Mammary epithelial cell (primary cell): ENCODE measurements at regions of chr3 and their contacts with region 1.

Region 1: GRCh38 chr3:14096745-14097144 is 27.9 kb downstream of the CHCHD4 start:
- DNase-seq: no peak
- H3K4me3 ChIP-seq: no peak overlapping the region
- H3K27ac ChIP-seq: no peak overlapping the region
- H3K4me1 ChIP-seq: no peaks in the 10 kb centered on the region
- H3K27me3 ChIP-seq: no peaks in the 10 kb centered on the region
- CTCF ChIP-seq: peak in 1 of 2 donors; percentile 14

Region 2: GRCh38 chr3:14047841-14048240 is 48.9 kb before region 1 on chr3:
- CTCF ChIA-PET with region 1: no interaction called
- dilution Hi-C with region 1: loop called (anchors 5 kb)
- in situ Hi-C with region 1: no loop called
- intact Hi-C with region 1: no loop called
- DNase-seq: peak; percentile 41
- H3K4me3 ChIP-seq: no peak overlapping the region
- H3K27ac ChIP-seq: no peak overlapping the region
- H3K4me1 ChIP-seq: no peaks in the 10 kb centered on the region
- H3K27me3 ChIP-seq: no peaks in the 10 kb centered on the region
- CTCF ChIP-seq: no peak